Activated CD4-positive, alpha-beta T cell treated with anti-CD3 and anti-CD28 coated beads for 36 hours (primary cell): ENCODE measurements at regions of chr6 and their contacts with region 1.

Region 1: DNA sequence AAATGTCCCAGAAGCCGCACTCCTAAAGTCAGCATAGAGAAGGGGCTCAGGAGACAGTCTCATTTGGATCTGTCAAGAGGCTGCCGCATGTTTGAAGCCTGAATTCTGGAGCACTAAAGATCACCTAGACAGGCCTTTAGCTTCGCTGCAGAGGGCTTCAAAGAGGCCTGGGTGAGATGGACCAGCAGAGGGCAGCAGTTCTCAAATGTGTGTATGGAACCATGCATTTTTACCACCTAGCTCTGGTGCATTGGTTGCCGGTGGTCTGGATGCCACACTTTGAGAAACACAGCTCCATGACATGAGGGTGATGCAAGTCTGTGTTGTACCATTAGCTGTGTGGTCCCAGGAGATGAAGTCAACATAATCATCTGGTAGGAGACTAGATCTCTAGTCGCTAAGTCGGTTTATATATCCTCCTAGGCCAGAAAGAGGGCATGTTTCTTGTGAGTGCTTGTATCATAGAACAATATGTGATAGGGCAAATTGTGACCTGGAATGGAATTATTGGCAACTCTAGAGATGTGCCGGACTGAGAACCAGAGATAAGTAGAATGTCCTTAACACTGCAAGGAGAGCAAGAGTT is 64.8 kb downstream of the KIAA0319 start:
- DNase-seq: peak; percentile 89
- ATAC-seq: peak; percentile 94
- H3K4me3 Mint-ChIP-seq: no peak overlapping the region
- H3K27ac Mint-ChIP-seq: no peak overlapping the region
- H3K4me1 Mint-ChIP-seq: peaks cover 3% of the 10 kb centered on the region
- H3K27me3 Mint-ChIP-seq: no peaks in the 10 kb centered on the region

Region 2: GRCh38 chr6:24547243-24547642 is 33.9 kb before region 1 on chr6:
- CTCF ChIA-PET with region 1: interaction called, 8 read pairs
- POLR2A ChIA-PET with region 1: no interaction called
- intact Hi-C with region 1: loop called in 1 of 2 experiments (anchors 1 kb)
- DNase-seq: peak; percentile 75
- ATAC-seq: peak; percentile 97
- H3K4me3 Mint-ChIP-seq: no peak overlapping the region
- H3K27ac Mint-ChIP-seq: no peak overlapping the region
- H3K4me1 Mint-ChIP-seq: peaks cover 5% of the 10 kb centered on the region
- H3K27me3 Mint-ChIP-seq: peaks cover 2% of the 10 kb centered on the region

Region 3: GRCh38 chr6:24595512-24596217 is 14.5 kb after region 1 on chr6:
- CTCF ChIA-PET with region 1: interaction called, 22 read pairs
- POLR2A ChIA-PET with region 1: no interaction called
- intact Hi-C with region 1: no loop called
- DNase-seq: no peak
- ATAC-seq: no peak
- H3K4me3 Mint-ChIP-seq: no peak overlapping the region
- H3K27ac Mint-ChIP-seq: no peak overlapping the region
- H3K4me1 Mint-ChIP-seq: no peaks in the 10 kb centered on the region
- H3K27me3 Mint-ChIP-seq: no peaks in the 10 kb centered on the region

Region 4: GRCh38 chr6:24666641-24667377 is 85.6 kb after region 1 on chr6 and contains the starts of genes ACOT13 and TDP2:
- CTCF ChIA-PET with region 1: interaction called, 12 read pairs
- POLR2A ChIA-PET with region 1: no interaction called
- intact Hi-C with region 1: no loop called
- DNase-seq: peak; percentile 97
- ATAC-seq: peak; percentile 97
- H3K4me3 Mint-ChIP-seq: peak within 1 kb of the TSS; percentile 90
- H3K27ac Mint-ChIP-seq: peak within 1 kb of the TSS; percentile 99
- H3K4me1 Mint-ChIP-seq: peaks cover 42% of the 10 kb centered on the region
- H3K27me3 Mint-ChIP-seq: no peaks in the 10 kb centered on the region
- total RNA-seq, gene ACOT13: 37.3 to 47.9 TPM
- total RNA-seq, gene TDP2: 41.4 to 45.4 TPM

Region 5: GRCh38 chr6:24699521-24700359 is 118.6 kb after region 1 on chr6:
- CTCF ChIA-PET with region 1: interaction called, 79 read pairs
- POLR2A ChIA-PET with region 1: no interaction called
- intact Hi-C with region 1: loop called (anchors 1 kb)
- DNase-seq: no peak
- ATAC-seq: peak; percentile 89
- H3K4me3 Mint-ChIP-seq: no peak overlapping the region
- H3K27ac Mint-ChIP-seq: peak overlapping the region; percentile 89
- H3K4me1 Mint-ChIP-seq: peaks cover 68% of the 10 kb centered on the region
- H3K27me3 Mint-ChIP-seq: no peaks in the 10 kb centered on the region

Region 6: DNA sequence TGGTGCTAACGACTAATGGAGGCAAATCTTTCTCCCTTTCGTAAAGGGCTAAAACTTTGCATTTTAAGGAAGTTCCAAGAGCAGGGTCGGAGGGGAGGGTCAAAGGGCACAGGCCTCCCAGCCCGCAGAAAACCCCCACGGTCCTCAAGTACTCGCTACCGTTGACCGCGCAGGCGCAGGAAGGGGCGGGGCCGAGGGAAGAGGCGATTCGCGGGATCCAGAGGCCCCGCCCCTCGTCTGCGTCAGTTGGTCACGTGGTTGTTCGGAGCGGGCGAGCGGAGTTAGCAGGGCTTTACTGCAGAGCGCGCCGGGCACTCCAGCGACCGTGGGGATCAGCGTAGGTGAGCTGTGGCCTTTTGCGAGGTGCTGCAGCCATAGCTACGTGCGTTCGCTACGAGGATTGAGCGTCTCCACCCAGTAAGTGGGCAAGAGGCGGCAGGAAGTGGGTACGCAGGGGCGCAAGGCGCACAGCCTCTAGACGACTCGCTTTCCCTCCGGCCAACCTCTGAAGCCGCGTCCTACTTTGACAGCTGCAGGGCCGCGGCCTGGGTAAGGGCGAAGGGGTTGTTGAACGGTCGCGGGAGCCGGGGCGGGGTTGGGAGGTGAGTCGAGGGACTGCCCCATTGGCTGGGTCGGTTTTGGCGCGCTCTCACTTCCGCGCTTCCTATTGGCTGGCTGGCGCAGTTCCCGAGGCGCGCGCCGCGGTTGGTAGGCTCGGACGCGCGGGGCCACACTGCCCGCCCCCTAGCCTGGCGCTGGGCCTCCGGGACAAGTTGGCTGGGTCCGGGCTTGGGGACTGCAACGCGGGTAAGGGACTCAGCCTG is 193.7 kb after region 1 on chr6 and contains the start of gene GMNN:
- CTCF ChIA-PET with region 1: interaction called, 7 read pairs
- POLR2A ChIA-PET with region 1: no interaction called
- intact Hi-C with region 1: loop called in 1 of 2 experiments (anchors 2 kb)
- DNase-seq: peak; percentile 99
- ATAC-seq: peak; percentile 93
- H3K4me3 Mint-ChIP-seq: peak within 1 kb of the TSS; percentile 98
- H3K27ac Mint-ChIP-seq: peak within 1 kb of the TSS; percentile 99
- H3K4me1 Mint-ChIP-seq: peaks cover 26% of the 10 kb centered on the region
- H3K27me3 Mint-ChIP-seq: no peaks in the 10 kb centered on the region
- total RNA-seq, gene GMNN: 74.0 to 76.1 TPM